ENCODE measurements at regions of chr14 and their contacts with region 1.

Region 1: DNA sequence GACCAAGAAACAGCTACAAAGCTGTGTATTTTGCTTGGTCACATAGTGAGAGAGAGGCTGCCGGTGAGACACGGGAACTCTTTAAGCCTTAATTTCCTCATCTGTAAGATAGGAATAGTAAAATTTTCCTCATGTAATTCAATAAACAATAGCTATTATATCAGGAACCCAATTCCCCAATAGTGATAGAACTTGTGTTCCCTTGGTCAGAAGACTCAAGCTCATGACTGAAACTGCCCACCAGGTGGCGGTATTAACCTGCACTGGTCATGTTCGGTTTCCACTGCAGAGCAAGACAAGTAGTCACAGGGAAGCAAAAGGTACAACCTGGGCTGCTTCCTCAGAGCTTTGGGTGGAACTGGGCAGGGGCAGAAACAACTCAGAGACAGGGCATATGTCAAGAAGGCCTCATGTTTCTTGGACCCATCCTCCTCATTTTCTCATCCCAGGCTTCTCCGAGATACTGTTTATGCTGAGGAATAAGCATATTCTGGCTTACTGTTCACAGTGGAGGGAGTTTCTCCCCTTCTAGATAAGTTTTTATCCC is 4.2 kb upstream of the AJUBA start:
- DNase-seq: peak; percentile 93 to 96
- H3K4me3 ChIP-seq: no peak overlapping the region
- H3K27ac ChIP-seq: no peak overlapping the region
- H3K4me1 ChIP-seq: peaks cover 0 to 23% (median 18%) of the 10 kb centered on the region in 4 donors
- H3K27me3 ChIP-seq: peaks cover 0 to 11% (median 6%) of the 10 kb centered on the region in 3 donors
- CTCF ChIP-seq: peak in 5 of 7 experiments; percentile 82 to 95 (median 89)
- EP300 ChIP-seq: no peak
- POLR2A ChIP-seq: no peak

Region 2: DNA sequence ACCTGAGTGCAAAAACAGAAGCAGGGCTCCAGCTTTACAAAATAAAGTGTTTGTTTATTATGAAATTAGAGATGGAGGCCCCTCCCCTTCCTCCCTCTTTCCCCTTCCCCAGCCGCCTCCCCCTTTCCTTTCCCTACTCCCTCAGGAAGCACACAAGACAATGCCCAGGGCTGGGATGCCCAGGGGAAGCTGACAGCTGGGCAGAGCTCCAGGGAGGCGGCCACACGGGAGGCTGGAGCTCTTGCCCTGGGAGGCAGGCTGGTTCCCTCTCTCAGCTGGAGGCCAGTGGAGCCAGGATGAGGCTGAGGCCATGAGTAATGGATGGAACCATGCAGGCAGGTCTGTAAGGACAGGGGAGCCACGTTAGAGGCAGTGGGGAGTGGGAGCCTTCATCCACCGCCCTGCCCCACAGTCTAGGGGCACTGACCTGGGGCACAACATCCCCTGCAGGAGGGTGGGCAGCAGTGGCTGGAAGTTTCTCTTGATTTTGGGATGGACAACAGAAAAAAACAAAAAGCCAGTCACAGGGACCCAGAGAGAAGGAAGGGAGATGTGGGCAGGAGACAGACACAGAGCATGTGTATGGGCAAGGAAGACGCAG is 60.6 kb after region 1 on chr14:
- intact Hi-C with region 1: no loop called
- DNase-seq: peak in 1 of 2 donors; percentile 30
- H3K4me3 ChIP-seq: no peak overlapping the region
- H3K27ac ChIP-seq: peak overlapping the region in 1 of 5 donors; percentile 7
- H3K4me1 ChIP-seq: peaks cover 0 to 18% (median 8%) of the 10 kb centered on the region in 4 donors
- H3K27me3 ChIP-seq: peaks cover 0 to 12% (median 0%) of the 10 kb centered on the region in 3 donors
- CTCF ChIP-seq: no peak
- EP300 ChIP-seq: no peak
- POLR2A ChIP-seq: no peak

Region 3: GRCh38 chr14:23057757-23058653 is 71.4 kb after region 1 on chr14:
- intact Hi-C with region 1: loop called (anchors 2 kb)
- DNase-seq: peak; percentile 88 to 96
- H3K4me3 ChIP-seq: peak overlapping the region; percentile 66 to 87 (median 76)
- H3K27ac ChIP-seq: peak overlapping the region; percentile 33 to 80 (median 71)
- H3K4me1 ChIP-seq: peaks cover 22 to 50% (median 27%) of the 10 kb centered on the region in 4 donors
- H3K27me3 ChIP-seq: no peaks in the 10 kb centered on the region
- CTCF ChIP-seq: peak in 6 of 7 experiments; percentile 75 to 95 (median 92)
- EP300 ChIP-seq: no peak
- POLR2A ChIP-seq: no peak

Region 4: DNA sequence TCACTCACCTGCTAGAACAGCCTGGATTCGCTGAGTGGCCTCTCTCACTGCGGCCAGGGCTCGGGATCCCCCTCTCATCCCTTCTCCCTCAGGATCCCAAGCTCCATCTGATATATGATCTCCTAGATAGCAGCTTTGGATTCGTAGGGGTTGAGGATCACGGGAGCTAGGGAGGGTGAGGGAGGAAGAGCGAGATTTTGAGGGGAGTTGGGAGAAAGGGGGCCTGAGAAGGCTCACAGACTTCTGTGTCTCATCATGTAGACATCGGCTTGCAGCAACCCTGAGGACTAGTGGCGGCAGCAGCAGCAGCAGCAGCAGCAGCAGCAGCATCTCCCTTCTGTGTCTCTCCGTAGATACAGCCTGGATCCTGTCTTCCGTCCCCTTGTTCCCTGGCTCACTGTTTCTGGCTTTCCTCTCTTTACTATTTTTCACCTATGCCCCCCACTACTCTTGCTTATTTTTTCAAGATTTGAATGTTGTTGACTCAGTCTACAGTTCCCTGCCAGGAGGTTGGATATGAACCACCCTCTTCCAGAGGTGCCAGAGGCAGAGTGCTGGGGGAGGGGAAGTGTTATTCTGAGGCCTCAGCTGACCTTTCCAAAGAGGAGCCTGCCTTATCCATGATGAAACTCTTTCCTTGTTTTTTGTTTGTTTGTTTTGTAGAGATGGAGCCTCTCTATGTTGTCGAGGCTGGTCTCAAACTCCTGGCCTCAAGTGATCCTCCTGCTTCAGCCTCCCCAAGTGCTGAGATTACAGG is 118.2 kb after region 1 on chr14 and contains the start of gene CIROP:
- intact Hi-C with region 1: no loop called
- DNase-seq: no peak
- H3K4me3 ChIP-seq: no peak within 1 kb of the TSS
- H3K27ac ChIP-seq: no peak within 1 kb of the TSS
- H3K4me1 ChIP-seq: peaks cover under 1 to 11% (median 3%) of the 10 kb centered on the region in 4 donors
- H3K27me3 ChIP-seq: peaks cover 0 to 2% (median 0%) of the 10 kb centered on the region in 3 donors
- CTCF ChIP-seq: no peak
- EP300 ChIP-seq: no peak
- POLR2A ChIP-seq: no peak
- total RNA-seq, gene CIROP: not detected